T-cell (primary cell): ENCODE measurements at regions of chr6 and their contacts with region 1.

Region 1: DNA sequence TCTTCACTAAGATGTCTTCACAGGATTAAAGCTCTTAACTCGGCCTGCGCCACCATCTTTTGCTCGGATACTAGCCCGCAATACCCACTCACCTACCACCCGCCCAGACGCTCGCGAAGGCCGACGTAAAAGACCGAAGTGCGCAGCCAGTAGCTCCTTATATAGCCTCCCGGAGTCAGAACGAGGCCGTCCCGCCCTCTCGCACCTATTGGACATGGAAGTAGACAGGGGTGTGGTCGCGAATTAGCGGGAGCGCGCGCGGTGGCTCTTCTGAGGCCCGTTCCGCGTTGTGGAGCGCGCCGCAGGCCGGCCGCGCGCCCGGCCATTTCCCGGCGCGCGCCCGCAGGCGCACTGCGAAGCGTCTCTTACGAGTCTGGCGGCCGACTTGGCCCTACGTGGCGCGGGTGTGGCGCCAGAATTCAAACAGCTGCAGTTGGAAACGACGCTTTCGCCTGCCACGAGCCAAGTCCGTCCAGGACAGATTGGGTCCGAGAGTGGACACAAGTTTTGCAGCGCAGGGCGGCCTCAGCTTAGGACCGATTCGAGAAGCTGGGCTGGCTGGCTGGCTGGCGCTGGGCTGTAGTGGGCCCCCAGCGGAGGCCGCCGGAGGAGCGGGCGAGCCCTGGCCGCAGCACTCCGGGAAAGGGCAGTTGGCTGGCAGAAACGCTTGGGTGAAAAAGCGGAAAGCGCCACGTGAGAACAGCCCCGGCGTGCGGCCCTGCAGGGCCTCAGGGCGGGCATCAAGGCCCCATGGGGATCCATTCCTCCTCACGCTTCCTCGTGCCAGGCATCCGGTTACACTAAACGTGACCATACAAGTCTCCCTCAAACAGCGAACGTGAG is 36.1 kb upstream of the SYNCRIP start:
- DNase-seq: peak; percentile 95 to 99 (median 98)
- ATAC-seq: peak; percentile 88 to 95 (median 94)
- H3K4me3 ChIP-seq: peak overlapping the region; percentile 81 to 89
- H3K4me3 Mint-ChIP-seq: peak overlapping the region; percentile 99 to 100 (median 100)
- H3K27ac ChIP-seq: peak overlapping the region; percentile 89
- H3K27ac Mint-ChIP-seq: peak overlapping the region; percentile 98
- H3K4me1 ChIP-seq: peaks cover 14 to 32% of the 10 kb centered on the region in 2 experiments
- H3K4me1 Mint-ChIP-seq: peaks cover 42 to 50% (median 47%) of the 10 kb centered on the region in 3 donors
- H3K27me3 ChIP-seq: no peaks in the 10 kb centered on the region
- H3K27me3 Mint-ChIP-seq: no peaks in the 10 kb centered on the region

Region 2: GRCh38 chr6:85632164-85632942 is 46.5 kb before region 1 on chr6:
- CTCF ChIA-PET with region 1: no interaction called
- POLR2A ChIA-PET with region 1: interaction called, 37 to 441 read pairs
- DNase-seq: no peak
- ATAC-seq: no peak
- H3K4me3 ChIP-seq: no peak overlapping the region
- H3K4me3 Mint-ChIP-seq: no peak overlapping the region
- H3K27ac ChIP-seq: no peak overlapping the region
- H3K27ac Mint-ChIP-seq: no peak overlapping the region
- H3K4me1 ChIP-seq: peaks cover 0 to 6% of the 10 kb centered on the region in 2 experiments
- H3K4me1 Mint-ChIP-seq: peaks cover 43 to 71% (median 63%) of the 10 kb centered on the region in 3 donors
- H3K27me3 ChIP-seq: no peaks in the 10 kb centered on the region
- H3K27me3 Mint-ChIP-seq: no peaks in the 10 kb centered on the region

Region 3: GRCh38 chr6:85642774-85643536 is 35.9 kb before region 1 on chr6 and contains the start of gene SYNCRIP:
- CTCF ChIA-PET with region 1: interaction called, 9 to 65 read pairs
- POLR2A ChIA-PET with region 1: interaction called, 78 to 441 read pairs
- DNase-seq: peak; percentile 96 to 99 (median 98)
- ATAC-seq: peak; percentile 81 to 86 (median 82)
- H3K4me3 ChIP-seq: peak within 1 kb of the TSS; percentile 93 to 100
- H3K4me3 Mint-ChIP-seq: peak within 1 kb of the TSS; percentile 87 to 93 (median 91)
- H3K27ac ChIP-seq: peak within 1 kb of the TSS; percentile 99
- H3K27ac Mint-ChIP-seq: peak within 1 kb of the TSS; percentile 97 to 99
- H3K4me1 ChIP-seq: peaks cover 12 to 27% of the 10 kb centered on the region in 2 experiments
- H3K4me1 Mint-ChIP-seq: peaks cover 45 to 52% (median 48%) of the 10 kb centered on the region in 3 donors
- H3K27me3 ChIP-seq: no peaks in the 10 kb centered on the region
- H3K27me3 Mint-ChIP-seq: no peaks in the 10 kb centered on the region
- total RNA-seq, gene SYNCRIP: 73.5 to 85.1 (median 80.5) TPM